ENCODE measurements at regions of chr22 and their contacts with region 1.

Region 1: DNA sequence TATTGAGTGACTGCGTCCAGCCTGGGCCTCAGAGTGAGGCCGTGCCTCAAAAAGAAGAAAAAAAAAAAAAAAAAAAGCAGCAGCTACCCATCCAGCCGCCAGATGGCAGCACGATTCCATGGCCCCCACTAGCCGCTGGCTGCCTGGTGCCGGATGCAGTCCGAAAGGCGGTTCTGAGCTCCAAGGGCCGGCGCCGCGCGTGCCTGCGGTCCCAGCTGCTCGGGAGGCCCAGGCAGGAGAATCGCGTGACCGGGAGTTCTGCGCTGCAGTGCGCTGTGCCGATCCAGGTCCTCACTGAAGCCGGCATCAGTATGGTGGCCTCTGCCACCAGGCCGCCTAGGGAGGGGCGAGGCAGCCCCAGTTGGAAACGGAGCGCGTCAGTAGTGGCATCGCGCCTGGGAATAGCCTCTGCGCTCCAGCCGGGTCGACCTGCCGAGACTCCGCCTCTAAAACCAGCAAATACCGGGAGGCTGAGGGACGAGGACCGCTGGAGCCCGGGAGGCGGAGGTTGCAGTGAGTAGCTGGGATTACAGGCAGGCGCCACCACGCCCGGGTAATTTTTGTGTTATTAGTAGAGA is 19.3 kb downstream of the SCARF2 start:
- DNase-seq: peak; percentile 77
- H3K4me3 Mint-ChIP-seq: peak overlapping the region; percentile 40
- H3K27ac Mint-ChIP-seq: no peak overlapping the region
- H3K4me1 Mint-ChIP-seq: peaks cover 2% of the 10 kb centered on the region
- H3K27me3 Mint-ChIP-seq: peaks cover 3% of the 10 kb centered on the region

Region 2: GRCh38 chr22:20354238-20354975 is 63.9 kb before region 1 on chr22:
- CTCF ChIA-PET with region 1: no interaction called
- POLR2A ChIA-PET with region 1: no interaction called
- intact Hi-C with region 1: no loop called
- DNase-seq: no peak
- H3K4me3 Mint-ChIP-seq: no peak overlapping the region
- H3K27ac Mint-ChIP-seq: no peak overlapping the region
- H3K4me1 Mint-ChIP-seq: no peaks in the 10 kb centered on the region
- H3K27me3 Mint-ChIP-seq: no peaks in the 10 kb centered on the region

Region 3: DNA sequence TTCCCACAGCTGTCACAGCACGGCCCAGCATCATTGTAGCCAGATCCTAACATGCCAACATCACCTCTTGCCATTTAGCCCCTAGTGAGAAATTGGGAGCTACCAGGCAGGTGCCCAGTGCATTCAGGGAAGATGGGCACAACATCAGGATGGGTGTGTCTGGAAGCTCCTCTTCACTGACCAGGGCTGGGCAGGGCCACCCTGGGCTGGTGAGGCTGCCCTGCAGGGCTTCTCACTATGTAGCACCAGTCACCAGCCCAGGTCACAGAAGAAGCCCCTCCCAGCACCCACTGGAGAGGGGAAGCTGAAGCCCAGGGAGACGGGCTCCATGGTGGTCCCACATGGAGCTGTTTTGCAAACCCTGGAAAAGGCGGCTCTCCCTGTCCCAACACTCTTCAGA is 10.5 kb before region 1 on chr22:
- CTCF ChIA-PET with region 1: interaction called, 18 read pairs
- POLR2A ChIA-PET with region 1: no interaction called
- intact Hi-C with region 1: no loop called
- DNase-seq: no peak
- H3K4me3 Mint-ChIP-seq: no peak overlapping the region
- H3K27ac Mint-ChIP-seq: no peak overlapping the region
- H3K4me1 Mint-ChIP-seq: peaks cover 3% of the 10 kb centered on the region
- H3K27me3 Mint-ChIP-seq: no peaks in the 10 kb centered on the region

Region 4: DNA sequence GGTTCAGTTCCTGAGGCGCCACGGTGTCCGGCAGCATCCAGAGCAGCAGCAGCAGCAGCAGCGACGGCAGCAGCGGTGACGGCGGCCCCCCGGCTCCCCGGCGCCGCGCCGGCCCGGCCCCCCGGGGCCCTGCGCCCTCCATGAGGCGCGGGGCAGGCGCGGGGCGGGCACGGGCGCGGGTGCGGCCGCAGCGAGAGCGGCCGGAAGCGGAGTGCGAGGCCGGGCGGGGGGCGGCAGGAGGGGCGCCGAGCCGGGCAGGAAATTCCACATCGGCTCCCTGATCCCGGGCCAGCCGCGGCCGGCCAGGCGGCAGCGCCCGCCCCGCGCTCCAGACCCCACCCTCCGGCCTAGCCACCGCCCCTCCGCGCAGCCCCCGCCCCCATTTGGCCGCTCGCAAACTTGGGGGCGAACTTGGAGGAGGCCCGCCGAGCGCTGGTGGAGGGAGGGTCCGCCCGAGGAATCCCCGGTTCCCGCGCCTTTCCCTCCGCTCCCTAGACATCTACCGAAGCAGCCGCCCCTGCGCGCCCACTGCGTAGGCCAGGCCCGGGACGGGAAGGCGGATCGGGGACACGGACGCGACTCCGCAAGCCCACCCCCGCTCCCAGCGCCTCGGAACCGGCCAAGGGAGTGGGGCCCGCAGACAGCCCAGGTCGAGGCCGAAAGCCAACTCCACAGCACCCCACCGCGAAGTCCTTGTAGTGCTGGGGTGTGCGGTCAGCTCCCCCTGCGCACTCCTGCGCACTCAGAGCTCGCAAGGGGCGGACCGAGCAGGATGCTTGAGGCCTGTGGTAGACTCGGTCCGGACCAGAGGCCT is 19.5 kb after region 1 on chr22 and contains the start of gene SCARF2:
- CTCF ChIA-PET with region 1: interaction called, 15 read pairs
- POLR2A ChIA-PET with region 1: no interaction called
- intact Hi-C with region 1: no loop called
- DNase-seq: no peak
- H3K4me3 Mint-ChIP-seq: peak within 1 kb of the TSS; percentile 30
- H3K27ac Mint-ChIP-seq: no peak within 1 kb of the TSS
- H3K4me1 Mint-ChIP-seq: peaks cover 14% of the 10 kb centered on the region
- H3K27me3 Mint-ChIP-seq: peaks cover 37% of the 10 kb centered on the region
- total RNA-seq, gene SCARF2: 0.43 to 0.70 TPM

Region 5: GRCh38 chr22:20463324-20464095 is 45.2 kb after region 1 on chr22:
- CTCF ChIA-PET with region 1: interaction called, 24 read pairs
- POLR2A ChIA-PET with region 1: no interaction called
- intact Hi-C with region 1: no loop called
- DNase-seq: peak; percentile 35
- H3K4me3 Mint-ChIP-seq: peak overlapping the region; percentile 35
- H3K27ac Mint-ChIP-seq: peak overlapping the region; percentile 94
- H3K4me1 Mint-ChIP-seq: peaks cover 54% of the 10 kb centered on the region
- H3K27me3 Mint-ChIP-seq: no peaks in the 10 kb centered on the region

Region 6: GRCh38 chr22:20568989-20569769 is 150.9 kb after region 1 on chr22:
- CTCF ChIA-PET with region 1: interaction called, 17 read pairs
- POLR2A ChIA-PET with region 1: interaction called, 4 read pairs
- intact Hi-C with region 1: loop called (anchors 2 kb)
- DNase-seq: peak; percentile 86
- H3K4me3 Mint-ChIP-seq: no peak overlapping the region
- H3K27ac Mint-ChIP-seq: peak overlapping the region; percentile 72
- H3K4me1 Mint-ChIP-seq: peaks cover 75% of the 10 kb centered on the region
- H3K27me3 Mint-ChIP-seq: no peaks in the 10 kb centered on the region

Measured in activated CD4-positive, alpha-beta memory T cell treated with anti-CD3 and anti-CD28 coated beads for 36 hours (primary cell).